Activated naive CD4-positive, alpha-beta T cell treated with anti-CD3 and anti-CD28 coated beads for 36 hours (primary cell): ENCODE measurements at regions of chr14 and their contacts with region 1.

Region 1: DNA sequence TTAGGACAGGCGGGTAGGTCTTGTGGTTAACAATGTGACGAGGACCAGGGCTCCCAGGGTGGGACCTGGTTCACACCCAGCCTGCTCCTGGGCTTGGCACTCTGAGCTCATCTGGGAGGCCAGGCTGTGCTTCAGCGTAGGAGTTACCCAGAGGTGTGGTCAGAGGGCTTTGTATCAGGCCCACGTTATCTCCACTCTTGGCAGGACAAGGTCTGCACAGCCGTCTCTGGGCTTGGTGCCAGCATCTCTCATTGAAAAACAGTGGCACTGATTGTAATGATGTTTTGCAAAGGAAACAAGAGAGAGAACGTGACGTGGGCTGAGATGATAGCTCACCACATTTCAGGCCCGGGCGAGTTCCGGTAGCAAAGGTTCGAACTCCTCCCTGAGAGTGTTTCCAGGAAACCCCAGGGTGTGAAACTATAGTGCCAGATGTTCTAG is 227.1 kb downstream of the KTN1 start:
- DNase-seq: peak; percentile 87
- H3K4me3 Mint-ChIP-seq: no peak overlapping the region
- H3K27ac Mint-ChIP-seq: peak overlapping the region; percentile 75
- H3K4me1 Mint-ChIP-seq: peaks cover 37% of the 10 kb centered on the region
- H3K27me3 Mint-ChIP-seq: no peaks in the 10 kb centered on the region

Region 2: DNA sequence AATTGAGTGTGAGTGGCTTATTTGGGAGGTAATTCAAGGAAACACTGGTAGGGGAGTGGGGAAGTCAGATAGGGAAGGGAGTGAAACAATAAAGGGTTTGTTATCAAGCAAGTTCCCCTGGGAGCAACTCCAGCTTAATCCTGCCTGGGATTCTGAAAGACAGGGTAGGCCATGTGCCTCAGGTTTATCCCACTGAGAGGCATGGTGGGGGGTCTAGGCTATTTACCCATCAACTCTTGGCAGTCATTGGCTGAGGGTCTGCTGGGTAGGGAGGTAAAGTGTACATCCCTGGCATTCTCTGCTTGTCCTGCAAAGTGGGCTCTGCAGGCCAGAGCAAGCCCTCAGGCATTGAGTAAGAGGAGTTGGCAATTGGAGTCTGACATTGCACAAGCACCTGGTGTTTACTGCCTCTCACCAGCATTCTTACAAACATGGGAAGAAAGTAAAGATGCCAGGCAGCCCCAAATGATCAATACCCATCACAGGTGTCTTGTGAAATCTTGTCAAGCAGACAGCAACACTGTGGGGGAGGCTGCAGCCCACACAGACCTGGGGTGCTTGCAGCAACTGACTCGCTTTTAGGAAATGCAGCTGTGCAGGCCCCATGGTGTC is 57.8 kb before region 1 on chr14:
- CTCF ChIA-PET with region 1: no interaction called
- intact Hi-C with region 1: no loop called
- DNase-seq: no peak
- H3K4me3 Mint-ChIP-seq: no peak overlapping the region
- H3K27ac Mint-ChIP-seq: no peak overlapping the region
- H3K4me1 Mint-ChIP-seq: no peaks in the 10 kb centered on the region
- H3K27me3 Mint-ChIP-seq: no peaks in the 10 kb centered on the region

Region 3: GRCh38 chr14:55762595-55763232 is 44.4 kb before region 1 on chr14:
- CTCF ChIA-PET with region 1: no interaction called
- intact Hi-C with region 1: loop called (anchors 1 kb)
- DNase-seq: peak; percentile 46
- H3K4me3 Mint-ChIP-seq: no peak overlapping the region
- H3K27ac Mint-ChIP-seq: peak overlapping the region; percentile 1
- H3K4me1 Mint-ChIP-seq: peaks cover 11% of the 10 kb centered on the region
- H3K27me3 Mint-ChIP-seq: no peaks in the 10 kb centered on the region

Region 4: DNA sequence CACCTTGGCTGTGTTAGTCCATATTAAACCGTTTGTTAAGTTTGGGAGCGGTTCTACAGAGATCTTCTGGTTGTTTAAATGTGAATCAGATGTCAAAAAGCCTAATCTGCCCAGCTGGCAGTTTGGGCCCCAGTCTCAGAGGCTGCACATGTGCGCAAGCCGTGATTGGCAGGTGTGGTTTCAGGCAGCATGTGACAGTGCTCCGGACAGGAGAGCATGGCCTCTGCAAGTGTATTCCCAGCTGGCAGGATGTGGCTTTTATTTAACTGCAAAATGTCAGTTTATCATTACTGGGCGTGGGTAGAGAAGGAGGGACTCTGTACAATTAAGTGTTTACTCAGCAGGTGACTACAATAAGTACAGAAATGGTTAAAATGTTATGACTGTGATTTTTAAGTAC is 388.6 kb after region 1 on chr14:
- CTCF ChIA-PET with region 1: no interaction called
- intact Hi-C with region 1: loop called (anchors 10 kb)
- DNase-seq: peak; percentile 72
- H3K4me3 Mint-ChIP-seq: peak overlapping the region; percentile 54
- H3K27ac Mint-ChIP-seq: peak overlapping the region; percentile 76
- H3K4me1 Mint-ChIP-seq: peaks cover 25% of the 10 kb centered on the region
- H3K27me3 Mint-ChIP-seq: no peaks in the 10 kb centered on the region

Region 5: GRCh38 chr14:57480051-57480450 is 1673.0 kb after region 1 on chr14:
- CTCF ChIA-PET with region 1: no interaction called
- intact Hi-C with region 1: no loop called
- DNase-seq: no peak
- H3K4me3 Mint-ChIP-seq: no peak overlapping the region
- H3K27ac Mint-ChIP-seq: no peak overlapping the region
- H3K4me1 Mint-ChIP-seq: no peaks in the 10 kb centered on the region
- H3K27me3 Mint-ChIP-seq: no peaks in the 10 kb centered on the region